ENCODE measurements at regions of chr5 and their contacts with region 1.

Region 1: DNA sequence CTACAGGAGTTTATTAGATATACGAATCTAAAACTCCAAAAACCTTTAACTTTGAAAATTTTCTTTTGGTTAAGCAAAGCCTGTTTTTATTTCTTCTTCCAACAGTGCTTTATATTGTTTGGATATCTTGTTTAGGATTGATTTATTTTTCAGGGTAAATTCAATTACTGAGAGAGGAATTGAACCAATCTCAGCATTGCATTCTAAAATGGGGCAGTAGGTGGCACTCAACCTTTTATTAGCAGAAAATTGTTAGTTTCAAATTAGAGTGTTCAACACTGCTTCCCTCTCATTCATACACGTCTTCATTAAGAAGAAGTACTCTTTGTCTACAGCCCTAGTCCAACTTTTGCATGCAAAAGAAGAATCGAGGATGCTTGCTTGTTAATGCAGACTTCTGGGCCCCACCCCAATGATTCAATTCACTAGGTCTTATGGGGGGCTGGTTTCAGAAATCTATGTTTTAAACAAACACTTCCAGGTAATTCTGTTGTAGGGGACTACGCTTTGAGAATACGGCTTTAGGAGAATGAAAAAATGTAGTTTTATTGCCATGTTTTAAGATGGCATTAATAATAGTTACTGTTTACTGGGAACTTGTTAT is 26.6 kb downstream of the MRPL22 start:
- DNase-seq: peak; percentile 73
- H3K4me3 ChIP-seq: peak overlapping the region in 2 of 3 experiments; percentile 21 to 77
- H3K27ac ChIP-seq: peak overlapping the region; percentile 87
- H3K4me1 ChIP-seq: peaks cover 58% of the 10 kb centered on the region
- H3K27me3 ChIP-seq: no peaks in the 10 kb centered on the region
- CTCF ChIP-seq: peak; percentile 43 to 44
- POLR2A ChIP-seq: no peak

Region 2: GRCh38 chr5:153714798-153715197 is 1252.7 kb before region 1 on chr5:
- CTCF ChIA-PET with region 1: no interaction called
- POLR2A ChIA-PET with region 1: no interaction called
- dilution Hi-C with region 1: no loop called
- intact Hi-C with region 1: no loop called
- DNase-seq: no peak
- H3K4me3 ChIP-seq: no peak overlapping the region
- H3K27ac ChIP-seq: no peak overlapping the region
- H3K4me1 ChIP-seq: no peaks in the 10 kb centered on the region
- H3K27me3 ChIP-seq: no peaks in the 10 kb centered on the region
- CTCF ChIP-seq: no peak
- POLR2A ChIP-seq: no peak

Region 3: DNA sequence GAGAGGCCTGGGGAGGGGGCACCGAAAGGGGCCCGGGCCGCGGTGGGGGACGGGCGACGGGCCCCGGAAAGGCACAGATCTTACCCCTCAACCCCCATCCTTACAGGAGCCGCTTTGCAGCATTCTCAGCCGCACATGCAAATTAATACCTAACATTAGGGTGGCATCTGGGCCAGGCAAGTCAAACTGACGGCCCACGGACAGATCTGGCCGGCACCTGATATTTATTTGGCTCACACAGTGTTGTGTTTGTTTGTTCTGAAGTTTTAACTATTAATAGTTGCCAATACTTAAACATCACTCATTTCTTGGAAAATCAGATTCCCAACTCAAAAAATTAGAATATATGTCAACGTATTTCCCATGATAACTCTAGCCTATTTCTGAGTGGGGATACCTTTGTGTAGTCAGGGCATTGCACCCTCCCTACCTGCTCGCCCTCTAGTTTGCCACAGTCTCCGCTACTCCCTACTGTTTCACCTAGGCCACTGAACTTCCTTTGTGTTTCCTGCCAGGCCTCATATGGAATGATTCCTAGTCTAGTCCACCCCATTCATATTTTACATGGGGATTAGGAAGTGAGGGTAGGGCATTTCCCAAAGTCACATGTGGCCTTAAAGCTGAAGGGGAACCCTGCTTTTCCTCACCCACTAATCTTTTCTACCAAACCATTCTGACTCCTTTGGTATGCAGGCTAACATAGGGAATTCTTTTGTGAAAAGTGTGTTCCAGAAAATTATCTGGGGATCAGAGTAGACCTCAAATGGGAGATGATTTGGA is 284.2 kb before region 1 on chr5:
- CTCF ChIA-PET with region 1: no interaction called
- POLR2A ChIA-PET with region 1: no interaction called
- dilution Hi-C with region 1: no loop called
- intact Hi-C with region 1: loop called (anchors 1 kb)
- DNase-seq: no peak
- H3K4me3 ChIP-seq: peak overlapping the region in 1 of 3 experiments; percentile 53
- H3K27ac ChIP-seq: no peak overlapping the region
- H3K4me1 ChIP-seq: peaks cover 8% of the 10 kb centered on the region
- H3K27me3 ChIP-seq: no peaks in the 10 kb centered on the region
- CTCF ChIP-seq: no peak
- POLR2A ChIP-seq: no peak

Region 4: DNA sequence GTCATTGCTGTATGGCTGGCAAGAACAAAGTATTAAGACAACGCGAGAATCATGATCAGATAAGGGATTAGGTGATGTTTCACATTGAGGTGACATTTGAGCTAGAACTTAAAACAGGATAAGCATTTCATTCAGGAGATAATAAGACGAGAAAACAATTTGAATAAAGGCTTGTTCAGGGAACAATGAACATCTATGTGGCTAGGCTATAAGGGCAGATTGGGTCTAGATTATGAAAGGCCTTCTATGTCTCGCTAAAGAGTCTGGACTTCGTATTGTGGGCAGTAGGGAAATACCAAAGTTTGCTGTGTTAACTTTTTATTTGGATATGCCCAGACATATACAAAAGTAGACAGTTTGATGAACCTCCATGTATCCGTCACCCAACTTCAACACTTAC is 19.7 kb before region 1 on chr5:
- CTCF ChIA-PET with region 1: interaction called, 35 read pairs
- POLR2A ChIA-PET with region 1: no interaction called
- dilution Hi-C with region 1: no loop called
- intact Hi-C with region 1: loop called (anchors 1 kb)
- DNase-seq: no peak
- H3K4me3 ChIP-seq: no peak overlapping the region
- H3K27ac ChIP-seq: no peak overlapping the region
- H3K4me1 ChIP-seq: peaks cover 34% of the 10 kb centered on the region
- H3K27me3 ChIP-seq: no peaks in the 10 kb centered on the region
- CTCF ChIP-seq: no peak
- POLR2A ChIP-seq: no peak

Region 5: GRCh38 chr5:155004138-155004744 is 36.7 kb after region 1 on chr5:
- CTCF ChIA-PET with region 1: interaction called, 127 read pairs
- POLR2A ChIA-PET with region 1: no interaction called
- dilution Hi-C with region 1: no loop called
- intact Hi-C with region 1: loop called (anchors 1 kb)
- DNase-seq: peak; percentile 56
- H3K4me3 ChIP-seq: no peak overlapping the region
- H3K27ac ChIP-seq: no peak overlapping the region
- H3K4me1 ChIP-seq: peaks cover 4% of the 10 kb centered on the region
- H3K27me3 ChIP-seq: no peaks in the 10 kb centered on the region
- CTCF ChIP-seq: peak; percentile 60 to 73
- POLR2A ChIP-seq: no peak

Measured in endothelial cell of umbilical vein (primary cell).